Caco-2 (cell line): ENCODE measurements at regions of chr19 and their contacts with region 1.

Region 1: GRCh38 chr19:48170038-48170812 is at the starts of genes LIG1 and ZSWIM9:
- DNase-seq: peak; percentile 97
- H3K4me3 ChIP-seq: peak within 1 kb of the TSS; percentile 100
- H3K4me3 Mint-ChIP-seq: peak within 1 kb of the TSS; percentile 77
- H3K27ac Mint-ChIP-seq: peak within 1 kb of the TSS; percentile 87
- H3K4me1 ChIP-seq: no peaks in the 10 kb centered on the region
- H3K4me1 Mint-ChIP-seq: peaks cover 8% of the 10 kb centered on the region
- H3K27me3 ChIP-seq: no peaks in the 10 kb centered on the region
- H3K27me3 Mint-ChIP-seq: no peaks in the 10 kb centered on the region
- CTCF ChIP-seq: no peak
- total RNA-seq, gene LIG1: 78.7 and 88.2 TPM in 2 replicates
- total RNA-seq, gene ZSWIM9: 4.9 and 6.6 TPM in 2 replicates

Region 2: GRCh38 chr19:48095612-48096175 is 74.5 kb before region 1 on chr19:
- CTCF ChIA-PET with region 1: no interaction called
- POLR2A ChIA-PET with region 1: interaction called, 10 read pairs
- intact Hi-C with region 1: no loop called
- DNase-seq: no peak
- H3K4me3 ChIP-seq: no peak overlapping the region
- H3K4me3 Mint-ChIP-seq: no peak overlapping the region
- H3K27ac Mint-ChIP-seq: no peak overlapping the region
- H3K4me1 ChIP-seq: no peaks in the 10 kb centered on the region
- H3K4me1 Mint-ChIP-seq: no peaks in the 10 kb centered on the region
- H3K27me3 ChIP-seq: no peaks in the 10 kb centered on the region; the same call in 1 of the 2 replicates
- H3K27me3 Mint-ChIP-seq: peaks cover 16% of the 10 kb centered on the region
- CTCF ChIP-seq: no peak

Region 3: DNA sequence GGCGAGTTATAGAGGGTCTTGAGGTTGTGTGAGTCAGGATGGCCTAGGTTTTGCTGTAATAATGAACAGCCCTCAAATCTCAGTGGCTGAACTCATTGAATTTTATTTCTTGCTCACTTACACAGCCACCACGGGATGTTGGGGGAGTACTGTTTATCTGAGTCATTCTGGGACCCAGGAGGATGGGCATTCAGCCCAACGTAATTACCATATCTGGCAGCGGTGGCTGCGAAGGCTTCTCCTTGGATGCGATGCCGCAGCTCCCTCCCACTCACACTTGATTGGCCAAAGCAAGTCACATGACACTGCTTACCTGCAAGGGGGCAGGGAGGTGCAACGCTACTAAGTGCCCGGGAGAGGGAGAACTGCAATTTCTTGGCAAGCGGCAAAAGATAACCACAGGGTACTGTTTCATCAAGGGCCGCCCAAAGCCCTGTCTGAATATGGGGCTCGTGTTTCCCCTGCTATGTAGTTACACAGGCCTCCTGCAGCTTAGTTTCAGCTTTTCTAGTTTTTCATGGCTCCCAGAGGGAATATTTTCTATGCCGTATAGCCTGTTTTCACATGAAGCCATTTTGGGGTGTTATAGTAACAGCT is 20.2 kb after region 1 on chr19:
- CTCF ChIA-PET with region 1: interaction called, 11 read pairs
- POLR2A ChIA-PET with region 1: interaction called, 3 read pairs
- intact Hi-C with region 1: no loop called
- DNase-seq: peak; percentile 93 to 95
- H3K4me3 ChIP-seq: no peak overlapping the region
- H3K4me3 Mint-ChIP-seq: peak overlapping the region; percentile 35
- H3K27ac Mint-ChIP-seq: no peak overlapping the region
- H3K4me1 ChIP-seq: peaks cover 3% of the 10 kb centered on the region; the same call in 1 of the 2 replicates
- H3K4me1 Mint-ChIP-seq: no peaks in the 10 kb centered on the region
- H3K27me3 ChIP-seq: no peaks in the 10 kb centered on the region
- H3K27me3 Mint-ChIP-seq: no peaks in the 10 kb centered on the region
- CTCF ChIP-seq: peak; percentile 65 to 77

Region 4: GRCh38 chr19:48203732-48204628 is 33.8 kb after region 1 on chr19:
- CTCF ChIA-PET with region 1: interaction called, 7 read pairs
- POLR2A ChIA-PET with region 1: interaction called, 32 read pairs
- intact Hi-C with region 1: loop called (anchors 1 kb)
- DNase-seq: peak; percentile 97 to 98
- H3K4me3 ChIP-seq: peak overlapping the region; percentile 67
- H3K4me3 Mint-ChIP-seq: no peak overlapping the region
- H3K27ac Mint-ChIP-seq: no peak overlapping the region
- H3K4me1 ChIP-seq: no peaks in the 10 kb centered on the region
- H3K4me1 Mint-ChIP-seq: no peaks in the 10 kb centered on the region
- H3K27me3 ChIP-seq: no peaks in the 10 kb centered on the region
- H3K27me3 Mint-ChIP-seq: no peaks in the 10 kb centered on the region
- CTCF ChIP-seq: no peak

Region 5: GRCh38 chr19:48249502-48250014 is 79.3 kb after region 1 on chr19:
- CTCF ChIA-PET with region 1: interaction called, 11 read pairs
- POLR2A ChIA-PET with region 1: no interaction called
- intact Hi-C with region 1: no loop called
- DNase-seq: no peak
- H3K4me3 ChIP-seq: no peak overlapping the region
- H3K4me3 Mint-ChIP-seq: no peak overlapping the region
- H3K27ac Mint-ChIP-seq: no peak overlapping the region
- H3K4me1 ChIP-seq: no peaks in the 10 kb centered on the region
- H3K4me1 Mint-ChIP-seq: peaks cover under 1% of the 10 kb centered on the region
- H3K27me3 ChIP-seq: no peaks in the 10 kb centered on the region
- H3K27me3 Mint-ChIP-seq: no peaks in the 10 kb centered on the region
- CTCF ChIP-seq: no peak

Region 6: DNA sequence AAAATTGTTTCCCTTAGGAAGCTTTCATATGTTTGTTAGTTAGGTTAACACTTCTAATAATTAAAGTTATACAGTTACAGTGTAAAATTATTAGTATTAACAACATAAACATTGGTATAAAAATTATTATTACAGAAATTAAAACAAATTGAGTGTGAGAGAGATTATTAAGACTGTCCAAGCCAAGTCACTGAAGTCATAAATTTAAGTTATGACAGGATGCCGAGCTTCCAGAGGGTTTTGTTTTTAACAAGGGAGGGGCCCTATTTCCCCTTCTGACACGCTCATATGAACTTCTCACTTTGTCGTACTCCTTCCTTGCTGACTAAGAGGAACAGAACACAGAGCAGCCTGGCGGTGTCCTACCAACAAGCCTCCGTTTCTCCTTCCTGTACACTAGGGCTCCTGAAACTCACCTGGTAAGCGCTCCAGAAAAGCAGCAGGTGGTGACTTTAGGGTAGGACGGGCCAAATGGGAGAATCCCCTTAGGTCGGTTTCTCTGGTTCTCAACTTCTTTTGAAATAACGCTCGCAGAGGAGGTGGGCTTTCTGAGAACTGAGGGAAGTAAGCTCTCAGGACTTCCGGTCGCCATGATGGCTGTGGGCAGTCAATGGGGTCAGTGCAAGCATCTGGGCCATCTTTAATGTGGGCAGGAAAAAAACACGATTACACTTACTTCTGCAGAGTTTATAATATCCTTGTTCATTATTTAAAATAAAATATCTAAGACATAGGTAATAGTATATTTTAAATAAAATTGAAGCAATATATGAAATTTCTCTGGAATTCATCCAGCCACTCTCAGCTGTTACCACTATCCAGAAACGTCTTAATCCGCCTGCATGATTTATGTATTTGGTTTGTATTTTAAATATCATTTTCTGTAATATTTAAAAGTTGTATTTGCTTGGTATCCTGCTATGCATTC is 85.4 kb after region 1 on chr19 and contains the start of gene CARD8:
- CTCF ChIA-PET with region 1: interaction called, 10 read pairs
- POLR2A ChIA-PET with region 1: interaction called, 12 read pairs
- intact Hi-C with region 1: loop called (anchors 5 kb)
- DNase-seq: peak; percentile 84 to 88
- H3K4me3 ChIP-seq: peak within 1 kb of the TSS; percentile 63
- H3K4me3 Mint-ChIP-seq: peak within 1 kb of the TSS; percentile 95
- H3K27ac Mint-ChIP-seq: peak within 1 kb of the TSS; percentile 96
- H3K4me1 ChIP-seq: peaks cover 7% of the 10 kb centered on the region; the same call in 1 of the 2 replicates
- H3K4me1 Mint-ChIP-seq: peaks cover 6% of the 10 kb centered on the region
- H3K27me3 ChIP-seq: no peaks in the 10 kb centered on the region
- H3K27me3 Mint-ChIP-seq: no peaks in the 10 kb centered on the region
- CTCF ChIP-seq: no peak
- total RNA-seq, gene CARD8: 17.7 and 19.9 TPM in 2 replicates

Region 7: GRCh38 chr19:48290771-48291488 is 120.7 kb after region 1 on chr19:
- CTCF ChIA-PET with region 1: interaction called, 10 read pairs
- POLR2A ChIA-PET with region 1: no interaction called
- intact Hi-C with region 1: no loop called
- DNase-seq: peak; percentile 72 to 89
- H3K4me3 ChIP-seq: peak overlapping the region; percentile 42
- H3K4me3 Mint-ChIP-seq: peak overlapping the region; percentile 82
- H3K27ac Mint-ChIP-seq: peak overlapping the region; percentile 42
- H3K4me1 ChIP-seq: peaks cover 12% of the 10 kb centered on the region
- H3K4me1 Mint-ChIP-seq: peaks cover 7% of the 10 kb centered on the region
- H3K27me3 ChIP-seq: no peaks in the 10 kb centered on the region; the same call in 1 of the 2 replicates
- H3K27me3 Mint-ChIP-seq: no peaks in the 10 kb centered on the region
- CTCF ChIP-seq: peak; percentile 96 to 98